Activated CD4-positive, alpha-beta T cell treated with anti-CD3 and anti-CD28 coated beads, Interleukin-2, amount 10 ng/mL, durations not matched to agents 24 days and 14 days (primary cell): ENCODE measurements at regions of chr19 and their contacts with region 1.

Region 1: DNA sequence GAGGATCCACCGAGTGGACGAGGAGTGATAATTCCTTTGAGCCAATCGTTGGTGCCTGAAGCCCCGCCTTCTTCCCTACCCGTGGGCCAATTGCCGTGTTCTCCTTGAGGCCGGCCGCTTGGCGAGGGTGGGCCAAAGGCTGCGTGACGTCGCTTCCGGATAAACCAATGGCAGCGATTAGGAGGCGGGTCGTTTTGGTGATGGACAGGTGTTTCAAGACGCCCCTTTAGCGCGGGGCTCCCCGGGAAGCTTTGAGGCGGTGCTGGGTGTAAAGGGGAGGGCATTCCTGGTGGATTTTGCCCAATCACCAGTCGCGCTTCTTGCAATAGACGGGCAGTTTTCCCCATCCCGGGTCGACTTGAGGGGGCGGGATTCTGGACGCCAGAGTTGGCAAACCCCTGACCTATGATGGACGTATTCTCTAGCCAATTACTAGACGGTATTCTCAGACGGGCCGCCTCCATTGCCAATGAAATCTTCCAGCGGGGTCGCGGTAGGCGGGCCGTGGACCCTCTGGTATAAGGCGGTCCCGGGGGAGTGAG is 310 bp upstream of the PRMT1 start:
- DNase-seq: peak; percentile 99
- H3K4me3 Mint-ChIP-seq: peak overlapping the region; percentile 95
- H3K27ac Mint-ChIP-seq: peak overlapping the region; percentile 99
- H3K4me1 Mint-ChIP-seq: peaks cover 31% of the 10 kb centered on the region
- H3K27me3 Mint-ChIP-seq: no peaks in the 10 kb centered on the region

Region 2: DNA sequence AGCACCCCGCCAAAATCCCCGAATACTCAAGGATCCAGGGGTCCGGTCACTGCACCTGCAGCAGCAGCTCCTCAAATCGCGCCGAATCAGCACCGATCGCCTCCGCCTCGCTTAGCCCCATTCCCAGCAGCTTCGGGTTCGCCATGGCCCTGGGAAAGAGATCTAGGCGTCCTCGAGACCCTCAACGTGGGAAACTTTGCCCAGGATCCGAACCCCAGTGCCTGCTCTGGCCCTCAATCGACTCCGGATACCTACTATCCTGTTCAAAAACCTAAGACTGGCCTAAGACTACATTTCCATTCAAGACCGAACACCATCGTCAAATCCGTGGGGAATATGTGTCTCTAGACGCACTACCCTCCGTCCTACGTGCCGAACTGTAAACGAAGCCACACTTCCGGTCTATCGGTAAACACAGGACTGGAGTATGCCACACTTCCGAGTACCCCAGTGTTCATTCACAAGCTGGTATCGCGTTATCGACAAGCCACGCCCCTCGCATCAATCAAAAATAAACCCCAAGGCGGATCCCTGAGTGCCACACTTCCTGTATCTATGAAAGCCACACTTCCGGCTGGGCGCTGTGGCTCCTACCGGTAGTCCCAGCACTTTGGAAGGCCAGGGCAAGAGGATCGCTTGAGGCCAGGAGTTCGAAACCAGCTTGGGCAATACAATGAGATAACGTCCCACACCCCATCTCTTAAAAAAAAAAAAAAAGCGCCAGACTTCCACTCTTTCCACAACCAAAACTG is 225.2 kb before region 1 on chr19 and contains the start of gene PIH1D1:
- intact Hi-C with region 1: loop called (anchors 2 kb)
- DNase-seq: peak; percentile 98
- H3K4me3 Mint-ChIP-seq: peak within 1 kb of the TSS; percentile 91
- H3K27ac Mint-ChIP-seq: peak within 1 kb of the TSS; percentile 100
- H3K4me1 Mint-ChIP-seq: peaks cover 38% of the 10 kb centered on the region
- H3K27me3 Mint-ChIP-seq: no peaks in the 10 kb centered on the region
- total RNA-seq, gene PIH1D1: 134 and 135 TPM in 2 replicates

Region 3: GRCh38 chr19:49497047-49497788 is 179.5 kb before region 1 on chr19:
- intact Hi-C with region 1: loop called (anchors 2 kb)
- DNase-seq: peak; percentile 93
- H3K4me3 Mint-ChIP-seq: peak overlapping the region; percentile 98
- H3K27ac Mint-ChIP-seq: peak overlapping the region; percentile 99
- H3K4me1 Mint-ChIP-seq: peaks cover 57% of the 10 kb centered on the region
- H3K27me3 Mint-ChIP-seq: no peaks in the 10 kb centered on the region

Region 4: GRCh38 chr19:49570138-49570856 is 106.5 kb before region 1 on chr19:
- intact Hi-C with region 1: loop called (anchors 2 kb)
- DNase-seq: peak; percentile 93
- H3K4me3 Mint-ChIP-seq: peak overlapping the region; percentile 56
- H3K27ac Mint-ChIP-seq: peak overlapping the region; percentile 77
- H3K4me1 Mint-ChIP-seq: peaks cover 50% of the 10 kb centered on the region
- H3K27me3 Mint-ChIP-seq: no peaks in the 10 kb centered on the region

Region 5: DNA sequence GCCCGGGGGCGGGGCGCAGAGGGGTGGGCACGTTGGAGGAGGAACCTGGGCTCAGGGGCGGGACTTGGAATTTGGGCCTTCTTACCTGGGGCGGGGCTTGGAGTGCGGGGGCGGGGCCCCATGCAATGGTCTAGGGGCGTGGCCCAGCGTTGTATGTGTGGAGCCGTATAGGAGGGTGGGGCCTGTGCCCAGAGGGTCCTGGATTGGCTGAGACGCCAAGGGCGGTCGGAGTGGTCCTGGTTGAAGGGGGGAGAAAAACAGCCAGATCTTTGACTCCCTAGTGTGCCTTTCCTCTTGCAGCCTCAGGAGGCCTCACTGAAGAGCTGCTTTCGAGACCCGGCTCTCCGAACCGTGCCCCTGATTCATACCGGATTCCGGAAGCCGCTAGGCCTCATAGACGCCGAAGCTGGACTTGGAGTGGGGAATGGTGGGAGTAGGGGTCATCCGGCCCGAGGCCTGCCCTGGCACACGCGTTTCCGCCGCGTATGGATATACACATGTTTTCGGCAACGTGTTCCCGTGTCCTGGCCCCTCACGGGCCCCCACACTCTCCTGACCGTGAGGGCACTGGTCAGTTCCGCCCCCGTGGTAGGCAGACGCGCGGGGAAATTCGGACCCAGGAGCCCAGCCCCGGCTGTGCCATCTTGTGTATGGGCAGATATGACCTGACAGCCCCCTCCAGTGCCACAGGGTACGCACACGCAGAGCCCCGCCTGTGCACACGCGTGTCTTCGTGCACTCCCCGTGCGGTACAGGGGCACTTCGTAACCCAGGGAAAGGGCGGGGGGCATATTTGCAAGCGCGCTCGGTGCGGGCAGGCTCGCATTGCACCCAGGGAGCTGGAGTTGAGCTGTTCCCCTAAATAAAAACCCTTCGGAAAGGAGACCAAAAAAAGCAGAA is 86.4 kb before region 1 on chr19:
- intact Hi-C with region 1: loop called (anchors 1 kb)
- DNase-seq: peak; percentile 98
- H3K4me3 Mint-ChIP-seq: peak overlapping the region; percentile 88
- H3K27ac Mint-ChIP-seq: peak overlapping the region; percentile 67
- H3K4me1 Mint-ChIP-seq: peaks cover 30% of the 10 kb centered on the region
- H3K27me3 Mint-ChIP-seq: peaks cover 11% of the 10 kb centered on the region

Region 6: DNA sequence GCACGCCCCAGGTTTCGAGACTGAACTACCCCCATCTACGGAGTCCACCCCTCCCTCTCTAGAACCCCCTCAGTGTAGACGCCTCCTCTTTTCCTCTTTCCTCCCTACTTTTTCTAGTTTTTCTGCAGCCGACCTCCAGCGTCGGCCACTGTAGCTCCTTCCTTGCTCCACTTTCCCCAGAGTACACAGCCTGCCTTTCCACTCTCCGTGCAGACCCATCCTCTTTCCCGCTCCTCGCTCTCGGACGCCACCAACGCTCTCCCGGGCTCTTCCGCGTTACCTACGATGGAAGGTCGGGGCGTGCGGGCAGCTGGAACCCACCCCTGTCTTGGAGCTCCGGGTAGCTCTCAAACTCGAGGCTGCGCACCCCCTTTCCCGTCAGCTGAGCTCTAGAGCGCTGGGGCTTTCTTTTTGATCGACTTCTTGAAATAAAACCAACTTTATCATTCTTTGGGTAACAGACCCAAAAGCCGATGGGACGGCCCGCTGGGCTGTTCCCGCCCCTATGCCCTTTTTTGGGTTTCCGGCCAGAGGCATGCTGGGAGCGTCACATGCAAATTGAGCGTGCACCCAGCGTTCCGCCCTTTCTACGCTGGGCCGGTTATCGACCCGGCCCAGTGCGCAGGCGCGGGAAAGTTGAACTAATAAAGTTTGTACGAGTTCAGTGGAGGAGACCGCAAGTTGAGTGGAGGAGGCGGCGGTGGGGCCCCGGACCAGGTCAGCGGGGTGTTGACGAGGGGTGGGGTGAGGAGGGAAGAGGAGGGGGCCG is 11.2 kb before region 1 on chr19 and contains the starts of genes BCL2L12 and IRF3:
- intact Hi-C with region 1: loop called (anchors 1 kb)
- DNase-seq: peak; percentile 100
- H3K4me3 Mint-ChIP-seq: peak within 1 kb of the TSS; percentile 97
- H3K27ac Mint-ChIP-seq: peak within 1 kb of the TSS; percentile 95
- H3K4me1 Mint-ChIP-seq: peaks cover 39% of the 10 kb centered on the region
- H3K27me3 Mint-ChIP-seq: no peaks in the 10 kb centered on the region
- total RNA-seq, gene BCL2L12: 69.3 and 72.0 TPM in 2 replicates
- total RNA-seq, gene IRF3: 146 and 151 TPM in 2 replicates

Region 7: GRCh38 chr19:49929611-49930482 is 253.1 kb after region 1 on chr19:
- intact Hi-C with region 1: loop called (anchors 2 kb)
- DNase-seq: peak; percentile 98
- H3K4me3 Mint-ChIP-seq: peak overlapping the region; percentile 97
- H3K27ac Mint-ChIP-seq: peak overlapping the region; percentile 100
- H3K4me1 Mint-ChIP-seq: peaks cover 54% of the 10 kb centered on the region
- H3K27me3 Mint-ChIP-seq: peaks cover 3% of the 10 kb centered on the region